Breast epithelium (tissue), 4 donors: ENCODE measurements at regions of chr5 and their contacts with region 1.

Region 1: GRCh38 chr5:121630402-121630801 is 221.3 kb upstream of the FTMT start:
- DNase-seq: no peak
- H3K4me3 ChIP-seq: peak overlapping the region in 1 of 3 donors; percentile 5
- H3K27ac ChIP-seq: no peak overlapping the region
- H3K4me1 ChIP-seq: no peaks in the 10 kb centered on the region
- H3K27me3 ChIP-seq: peaks cover 0 to 3% of the 10 kb centered on the region in 2 donors
- CTCF ChIP-seq: no peak
- POLR2A ChIP-seq: no peak

Region 2: DNA sequence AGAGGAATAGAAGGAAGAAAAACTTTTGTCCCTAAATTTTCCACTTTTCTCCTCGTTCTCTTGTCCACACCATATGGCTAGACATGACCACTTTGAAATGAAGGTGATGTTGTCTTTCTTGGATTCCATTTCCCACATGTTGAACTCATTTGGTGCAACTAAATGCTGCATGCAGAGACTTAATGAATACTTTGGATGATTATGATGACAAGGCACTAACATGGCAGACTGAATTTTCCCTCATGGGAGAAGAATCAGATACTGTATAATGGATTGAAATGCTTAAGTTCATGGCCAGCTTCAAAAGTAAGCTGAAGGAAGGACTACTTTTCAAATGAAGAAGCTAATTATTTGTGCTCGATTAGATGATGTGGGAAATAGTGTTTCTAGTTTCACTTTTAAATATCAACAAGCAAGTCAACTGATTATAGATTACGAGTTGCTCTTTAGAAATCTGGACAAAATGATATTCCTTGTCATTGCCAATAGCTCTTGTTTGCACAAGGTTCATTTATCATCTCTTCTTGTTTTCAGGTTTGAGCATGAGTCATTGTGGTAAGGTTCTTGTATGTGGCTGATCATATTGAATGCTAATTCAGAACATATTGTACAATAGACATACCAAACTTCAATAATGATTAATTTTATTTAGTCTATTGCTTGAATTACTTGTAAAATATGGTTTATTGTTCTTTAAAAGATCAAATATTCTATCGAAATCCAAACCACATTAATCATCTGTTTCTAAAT is 280.0 kb before region 1 on chr5:
- intact Hi-C with region 1: no loop called
- DNase-seq: no peak
- H3K4me3 ChIP-seq: no peak overlapping the region
- H3K27ac ChIP-seq: no peak overlapping the region
- H3K4me1 ChIP-seq: no peaks in the 10 kb centered on the region
- H3K27me3 ChIP-seq: no peaks in the 10 kb centered on the region
- CTCF ChIP-seq: no peak
- POLR2A ChIP-seq: no peak

Region 3: DNA sequence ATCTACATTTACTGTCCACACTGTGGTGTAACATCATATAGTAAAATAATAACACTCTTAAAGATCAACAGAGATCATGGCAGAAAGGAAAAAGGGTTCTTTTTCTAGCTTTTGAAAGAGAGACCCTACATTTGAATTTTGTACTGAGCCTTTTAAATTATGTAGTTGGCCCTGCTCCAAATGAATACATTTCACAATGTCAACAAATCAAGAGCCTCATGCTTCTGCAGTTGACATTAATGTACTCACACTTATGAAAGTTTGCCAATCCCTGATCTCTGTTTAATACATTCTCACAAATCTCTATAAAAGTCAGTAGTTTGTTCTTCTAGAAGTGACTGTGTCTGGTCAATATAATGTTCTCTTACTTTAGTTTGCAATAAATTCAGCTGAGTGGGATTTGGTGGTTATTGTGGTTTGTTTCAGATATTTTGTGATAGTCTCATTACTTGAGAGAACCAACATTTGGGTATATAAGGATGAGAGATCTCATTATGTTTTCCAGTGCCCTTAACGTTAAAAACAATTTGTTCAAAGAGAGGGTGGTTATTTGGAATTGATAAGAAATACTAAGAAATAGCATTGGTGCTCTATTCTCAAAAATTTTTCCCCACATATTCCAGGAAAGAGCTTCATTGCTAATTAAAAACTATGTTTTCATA is 56.5 kb before region 1 on chr5:
- intact Hi-C with region 1: no loop called
- DNase-seq: no peak
- H3K4me3 ChIP-seq: no peak overlapping the region
- H3K27ac ChIP-seq: no peak overlapping the region
- H3K4me1 ChIP-seq: no peaks in the 10 kb centered on the region
- H3K27me3 ChIP-seq: no peaks in the 10 kb centered on the region
- CTCF ChIP-seq: no peak
- POLR2A ChIP-seq: no peak

Region 4: DNA sequence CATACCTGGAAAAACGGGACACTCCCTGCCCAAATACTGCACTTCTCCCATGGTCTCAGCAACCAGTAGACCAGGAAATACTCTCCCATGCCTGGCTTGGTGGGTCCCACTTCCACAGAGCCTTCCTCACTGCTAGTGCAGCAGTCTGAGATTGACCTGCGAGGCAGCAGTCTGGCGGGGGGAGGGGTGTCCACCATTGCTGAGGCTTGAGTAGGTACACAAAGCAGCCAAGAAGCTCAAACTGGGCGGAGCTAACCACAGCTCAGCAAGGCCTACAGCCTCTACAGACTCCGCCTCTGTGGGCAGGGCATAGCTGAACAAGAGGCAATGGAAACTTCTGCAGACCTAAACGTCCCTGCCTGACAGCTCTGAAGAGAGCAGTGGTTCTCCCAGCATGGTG is 29.7 kb after region 1 on chr5:
- intact Hi-C with region 1: loop called (anchors 2 kb)
- DNase-seq: no peak
- H3K4me3 ChIP-seq: no peak overlapping the region
- H3K27ac ChIP-seq: no peak overlapping the region
- H3K4me1 ChIP-seq: no peaks in the 10 kb centered on the region
- H3K27me3 ChIP-seq: no peaks in the 10 kb centered on the region
- CTCF ChIP-seq: no peak
- POLR2A ChIP-seq: no peak